OCI-LY7 (cell line): ENCODE measurements at regions of chr11 and their contacts with region 1.

Region 1: GRCh38 chr11:10455637-10456487 is 798 bp downstream of the AMPD3 start:
- DNase-seq: peak; percentile 93
- H3K4me3 ChIP-seq: peak overlapping the region; percentile 73
- H3K27ac ChIP-seq: peak overlapping the region; percentile 93
- H3K4me1 ChIP-seq: peaks cover 72% of the 10 kb centered on the region
- CTCF ChIP-seq: no peak

Region 2: DNA sequence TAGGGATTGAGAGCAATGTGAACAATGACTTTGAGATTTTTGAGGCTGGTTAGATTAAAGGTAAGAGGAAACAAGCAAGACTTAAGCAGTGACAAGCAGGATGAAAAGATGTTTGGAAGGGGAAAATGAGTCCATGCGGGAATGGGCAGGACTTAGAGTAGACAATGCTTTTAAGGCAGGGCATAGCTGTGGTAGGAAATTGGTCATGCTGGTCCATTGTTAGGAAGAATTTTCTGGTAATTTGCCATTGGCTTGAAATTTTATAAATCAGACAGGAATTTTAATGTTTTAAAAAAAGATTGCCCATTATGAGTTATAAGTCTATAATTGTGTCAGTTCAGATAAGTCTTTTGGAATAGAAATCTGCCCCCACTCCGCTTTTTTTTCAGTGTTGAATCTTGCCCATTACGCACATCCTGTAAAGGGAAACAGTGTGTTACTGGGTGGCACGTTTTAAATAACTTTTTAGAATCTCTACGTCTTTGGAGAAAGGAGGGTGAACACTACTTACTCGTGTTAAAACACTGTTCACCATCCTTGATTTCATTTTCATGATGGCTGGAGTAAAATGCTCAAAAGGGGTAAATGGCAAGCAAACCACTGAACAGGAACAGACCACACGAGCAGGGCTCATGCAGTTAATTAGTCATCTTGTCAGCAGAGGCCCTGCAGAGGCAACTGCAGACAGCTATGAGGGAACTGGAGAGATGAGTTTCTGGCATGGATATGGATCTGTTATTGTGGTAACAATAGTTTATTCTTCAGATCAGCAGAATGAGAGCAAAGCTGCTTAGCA is 766.9 kb before region 1 on chr11:
- CTCF ChIA-PET with region 1: no interaction called
- POLR2A ChIA-PET with region 1: no interaction called
- intact Hi-C with region 1: loop called (anchors 10 kb)
- DNase-seq: peak; percentile 87
- H3K4me3 ChIP-seq: peak overlapping the region; percentile 51
- H3K27ac ChIP-seq: peak overlapping the region; percentile 96
- H3K4me1 ChIP-seq: peaks cover 99% of the 10 kb centered on the region
- CTCF ChIP-seq: no peak

Region 3: DNA sequence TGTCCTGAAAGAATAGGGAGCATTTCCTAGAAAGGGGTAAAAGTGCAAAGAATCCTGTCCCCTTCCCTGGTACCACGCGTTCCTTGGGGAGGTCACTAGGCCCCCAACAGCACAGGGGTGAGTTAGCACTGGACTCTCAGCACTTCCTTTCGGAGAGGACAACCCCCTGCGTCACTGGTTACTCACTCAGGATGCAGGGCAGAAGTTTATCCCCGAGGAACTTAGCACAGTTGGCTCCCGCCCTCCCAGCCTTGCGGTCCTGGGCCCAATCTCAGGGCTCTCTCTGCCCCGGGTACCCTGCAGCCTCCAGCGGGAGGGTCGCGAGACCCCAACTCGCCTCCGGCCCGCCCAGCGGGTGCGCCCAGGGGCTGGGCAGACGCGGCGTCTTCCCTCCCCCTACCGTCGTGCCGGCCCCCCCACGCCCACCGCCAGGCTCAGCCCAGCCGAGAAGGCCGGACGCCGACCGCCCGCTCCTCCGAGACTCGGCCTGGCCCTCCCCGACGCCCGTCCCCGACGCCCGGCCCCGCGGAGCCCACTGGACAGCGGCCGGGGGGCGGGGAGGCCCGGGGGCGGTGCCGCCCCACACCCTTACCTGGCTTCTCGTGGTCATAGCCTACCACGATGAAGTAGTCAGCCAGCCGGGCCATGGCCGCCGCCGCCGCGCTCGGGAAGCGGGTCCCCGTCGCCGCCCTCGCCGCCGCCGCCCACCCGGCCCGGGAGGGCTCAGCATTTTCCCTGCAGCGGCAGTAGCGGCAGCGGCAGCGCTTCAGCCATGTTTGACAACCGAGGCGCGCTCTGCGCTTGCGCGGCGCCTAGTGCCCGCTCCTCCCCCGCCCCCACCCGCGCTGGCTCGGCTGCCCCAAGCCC is 162.2 kb before region 1 on chr11 and contains the start of gene SBF2:
- CTCF ChIA-PET with region 1: no interaction called
- POLR2A ChIA-PET with region 1: no interaction called
- intact Hi-C with region 1: no loop called
- DNase-seq: peak; percentile 87
- H3K4me3 ChIP-seq: peak within 1 kb of the TSS; percentile 89
- H3K27ac ChIP-seq: no peak within 1 kb of the TSS
- H3K4me1 ChIP-seq: peaks cover 20% of the 10 kb centered on the region
- CTCF ChIP-seq: no peak
- total RNA-seq, gene SBF2: 12.4 and 14.3 TPM in 2 replicates

Region 4: DNA sequence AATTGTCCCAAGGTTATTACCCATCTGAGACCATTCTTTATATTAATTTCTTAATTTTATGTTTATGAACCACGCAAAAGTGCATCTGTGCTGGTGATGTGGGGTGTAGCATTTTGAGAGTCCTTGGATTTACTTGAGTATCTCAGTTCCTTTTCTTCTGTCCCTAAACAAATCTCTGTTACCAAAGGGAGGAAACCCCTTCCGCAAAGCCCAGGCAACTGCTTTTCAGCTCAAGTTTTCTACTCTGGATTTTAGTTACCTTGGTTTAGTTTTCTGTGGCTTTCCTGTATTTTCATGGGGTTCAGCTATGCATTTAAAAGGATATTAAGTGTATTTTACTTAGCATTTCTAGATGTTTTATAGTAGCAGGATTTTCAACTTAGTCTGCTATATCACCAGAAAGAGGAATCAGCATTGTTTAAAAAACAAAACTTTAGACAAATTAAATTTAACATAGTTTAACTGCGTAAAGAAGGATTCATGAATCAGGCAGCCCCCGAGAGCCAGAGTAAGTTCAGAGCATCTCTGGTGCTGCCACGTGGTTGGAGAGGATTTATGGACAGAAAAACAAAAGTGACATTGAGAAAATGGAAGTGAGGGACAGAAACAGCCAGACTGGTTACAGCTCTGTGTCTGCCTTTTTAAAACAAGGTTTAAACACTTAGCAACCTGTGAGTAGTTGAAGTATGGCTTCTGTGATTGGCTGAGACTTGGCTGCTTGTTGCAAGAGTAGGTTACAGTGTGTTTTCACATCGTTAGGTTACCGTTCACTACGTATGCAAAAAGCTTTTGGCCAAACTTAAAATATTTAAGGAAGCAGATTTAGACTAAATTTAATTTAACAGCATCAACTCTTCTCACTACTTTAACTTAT is 141.4 kb before region 1 on chr11:
- CTCF ChIA-PET with region 1: no interaction called
- POLR2A ChIA-PET with region 1: interaction called, 7 read pairs
- intact Hi-C with region 1: loop called (anchors 5 kb)
- DNase-seq: peak; percentile 92
- H3K4me3 ChIP-seq: peak overlapping the region; percentile 50
- H3K27ac ChIP-seq: peak overlapping the region; percentile 93
- H3K4me1 ChIP-seq: peaks cover 96% of the 10 kb centered on the region
- CTCF ChIP-seq: no peak

Region 5: GRCh38 chr11:10441652-10442503 is 14.0 kb before region 1 on chr11:
- CTCF ChIA-PET with region 1: interaction called, 5 read pairs
- POLR2A ChIA-PET with region 1: interaction called, 97 read pairs
- intact Hi-C with region 1: no loop called
- DNase-seq: peak; percentile 56
- H3K4me3 ChIP-seq: peak overlapping the region; percentile 24
- H3K27ac ChIP-seq: peak overlapping the region; percentile 52
- H3K4me1 ChIP-seq: peaks cover 32% of the 10 kb centered on the region
- CTCF ChIP-seq: no peak

Region 6: DNA sequence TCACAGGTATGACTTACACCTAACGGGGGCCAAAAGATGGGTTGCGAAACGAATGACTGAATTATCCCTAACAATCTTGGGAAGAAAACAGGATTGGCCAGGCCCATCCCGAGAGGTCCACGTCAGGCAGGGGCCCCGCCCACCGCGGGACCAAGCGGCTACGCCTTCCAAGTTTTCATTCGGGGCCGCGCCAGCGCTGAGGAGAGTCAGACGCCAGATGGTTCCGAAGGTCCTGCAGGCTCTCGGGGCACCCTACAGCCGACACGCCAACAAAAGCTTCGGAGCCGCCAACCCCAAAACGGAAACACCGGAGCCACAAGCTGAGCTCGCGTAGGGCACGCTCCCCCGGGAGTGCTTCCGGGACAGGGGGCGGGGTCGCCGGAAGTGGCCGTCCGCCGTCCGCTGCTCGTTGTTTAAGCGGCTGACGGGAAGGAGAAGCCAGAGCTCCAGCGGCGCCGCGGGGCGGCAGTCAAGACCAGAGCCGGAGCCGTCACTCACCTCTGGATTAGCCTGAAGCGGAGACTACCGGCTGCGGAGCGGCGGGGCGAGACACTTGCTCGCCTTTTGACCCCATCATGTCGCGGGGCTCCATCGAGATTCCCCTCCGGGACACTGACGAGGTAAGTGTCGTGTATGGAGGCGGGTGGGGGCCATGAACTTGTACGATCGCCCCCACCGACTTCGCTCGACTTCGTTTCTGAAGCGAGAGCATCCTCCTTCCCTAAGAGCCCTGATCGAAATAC is 295.1 kb after region 1 on chr11 and contains the start of gene CTR9:
- CTCF ChIA-PET with region 1: no interaction called
- POLR2A ChIA-PET with region 1: no interaction called
- intact Hi-C with region 1: loop called (anchors 5 kb)
- DNase-seq: peak; percentile 93
- H3K4me3 ChIP-seq: peak within 1 kb of the TSS; percentile 95
- H3K27ac ChIP-seq: peak within 1 kb of the TSS; percentile 72
- H3K4me1 ChIP-seq: peaks cover 13% of the 10 kb centered on the region
- CTCF ChIP-seq: peak; percentile 42; the same call in 1 of the 2 replicates
- total RNA-seq, gene CTR9: 15.3 and 19.3 TPM in 2 replicates

Region 7: GRCh38 chr11:10857709-10858438 is 402.0 kb after region 1 on chr11 and contains the start of gene ZBED5:
- CTCF ChIA-PET with region 1: no interaction called
- POLR2A ChIA-PET with region 1: interaction called, 4 read pairs
- intact Hi-C with region 1: loop called (anchors 5 kb)
- DNase-seq: peak; percentile 97
- H3K4me3 ChIP-seq: peak within 1 kb of the TSS; percentile 85
- H3K27ac ChIP-seq: peak within 1 kb of the TSS; percentile 81
- H3K4me1 ChIP-seq: peaks cover 22% of the 10 kb centered on the region
- CTCF ChIP-seq: no peak
- total RNA-seq, gene ZBED5: 37.6 and 42.1 TPM in 2 replicates